AG04449 (cell line): ENCODE measurements at regions of chr17 and their contacts with region 1.

Region 1: GRCh38 chr17:39621523-39622379 is 5.0 kb upstream of the PPP1R1B start:
- DNase-seq: no peak
- H3K4me3 ChIP-seq: peak overlapping the region; percentile 8; the same call in 1 of the 2 replicates
- CTCF ChIP-seq: peak; percentile 100

Region 2: GRCh38 chr17:39527220-39527813 is 94.4 kb before region 1 on chr17:
- CTCF ChIA-PET with region 1: interaction called, 24 read pairs
- POLR2A ChIA-PET with region 1: no interaction called
- DNase-seq: no peak
- H3K4me3 ChIP-seq: no peak overlapping the region
- CTCF ChIP-seq: peak; percentile 39

Region 3: DNA sequence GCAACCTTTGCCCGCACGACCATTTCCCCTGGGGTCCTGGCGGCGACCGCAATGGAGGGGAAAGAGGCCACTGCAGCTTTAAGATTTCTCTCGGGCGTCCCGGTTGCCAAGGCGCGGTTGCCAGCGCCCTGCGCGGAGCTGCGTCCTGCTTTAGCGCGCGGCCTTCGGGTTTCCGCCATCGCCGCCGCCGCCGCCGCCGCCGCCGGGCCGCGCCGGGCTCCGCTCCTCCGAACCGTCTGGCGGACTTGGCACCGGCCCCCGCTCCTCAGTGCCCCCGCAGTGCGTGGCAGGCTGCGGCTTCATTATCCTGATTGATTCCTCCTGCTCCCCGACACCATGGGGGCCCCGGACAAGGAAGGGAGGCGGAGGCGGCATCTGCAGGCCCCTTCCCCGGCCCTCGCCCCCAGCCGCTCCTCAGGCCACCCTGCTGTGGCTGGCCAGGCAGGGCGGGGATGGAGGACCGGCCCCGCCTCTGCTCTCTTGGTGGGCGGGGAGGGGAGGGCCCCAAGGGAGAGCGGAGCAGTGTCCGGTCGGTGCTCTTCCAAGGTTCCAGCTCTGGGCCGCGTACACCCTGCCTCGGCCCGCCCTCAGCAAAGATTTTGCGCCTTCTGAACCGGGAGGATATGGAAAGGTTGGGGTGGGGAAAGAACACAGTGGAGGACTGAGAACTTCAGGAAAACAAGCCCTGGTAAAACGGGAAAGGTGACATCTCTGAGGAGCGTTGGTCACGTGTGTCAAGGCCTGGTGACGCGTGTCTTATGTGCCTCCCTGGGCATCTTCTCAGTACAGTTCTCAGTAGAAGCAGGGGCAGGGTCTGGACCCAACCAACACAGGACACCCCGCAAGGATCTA is 48.1 kb before region 1 on chr17:
- CTCF ChIA-PET with region 1: interaction called, 781 read pairs
- POLR2A ChIA-PET with region 1: no interaction called
- DNase-seq: no peak
- H3K4me3 ChIP-seq: peak overlapping the region; percentile 66
- CTCF ChIP-seq: no peak

Region 4: DNA sequence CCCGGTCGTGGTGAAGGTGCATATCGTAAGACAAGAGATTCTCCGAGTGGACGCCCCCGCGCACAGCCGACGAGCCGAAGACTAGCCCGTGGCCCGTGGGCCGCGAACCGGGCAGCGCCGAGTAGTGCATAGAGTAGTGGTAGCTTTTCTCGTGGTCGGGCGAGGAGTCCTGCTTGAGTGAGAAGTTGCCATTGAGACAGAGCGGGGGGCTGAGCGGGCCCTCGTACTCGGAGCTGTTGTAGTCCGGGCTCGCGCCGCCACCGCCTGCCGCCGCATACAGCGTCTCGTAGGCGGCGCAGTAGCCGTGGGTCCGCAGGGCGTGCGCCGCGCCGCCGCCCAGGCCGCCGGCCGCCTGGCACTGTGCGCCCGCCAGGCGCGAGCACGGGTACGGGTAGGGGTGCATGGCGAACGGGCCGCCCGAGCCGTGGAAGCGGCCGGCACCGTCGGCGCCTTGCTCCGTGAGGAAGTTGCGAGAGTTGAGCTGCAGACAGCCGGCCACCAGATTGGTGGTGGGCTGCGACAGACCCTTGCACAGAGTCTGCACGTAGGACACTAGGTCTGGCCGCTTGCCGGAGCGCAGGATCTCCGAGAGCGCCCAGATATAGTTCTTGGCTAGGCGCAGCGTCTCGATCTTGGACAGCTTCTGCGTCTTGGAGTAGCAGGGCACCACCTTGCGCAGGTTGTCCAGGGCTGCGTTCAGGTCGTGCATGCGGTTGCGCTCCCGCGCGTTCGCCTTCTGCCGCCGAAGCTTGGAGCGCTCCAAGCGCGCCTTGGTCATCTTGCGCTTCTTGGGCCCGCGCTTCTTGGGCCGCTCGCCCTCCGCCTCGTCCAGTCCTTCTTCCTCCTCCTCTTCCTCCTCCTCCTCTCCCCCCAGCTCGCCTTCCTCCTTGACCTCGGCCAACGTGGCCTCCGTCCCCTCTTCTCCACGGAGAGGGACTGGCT is 16.0 kb before region 1 on chr17:
- CTCF ChIA-PET with region 1: interaction called, 71 read pairs
- POLR2A ChIA-PET with region 1: no interaction called
- DNase-seq: no peak
- H3K4me3 ChIP-seq: no peak overlapping the region
- CTCF ChIP-seq: no peak

Region 5: DNA sequence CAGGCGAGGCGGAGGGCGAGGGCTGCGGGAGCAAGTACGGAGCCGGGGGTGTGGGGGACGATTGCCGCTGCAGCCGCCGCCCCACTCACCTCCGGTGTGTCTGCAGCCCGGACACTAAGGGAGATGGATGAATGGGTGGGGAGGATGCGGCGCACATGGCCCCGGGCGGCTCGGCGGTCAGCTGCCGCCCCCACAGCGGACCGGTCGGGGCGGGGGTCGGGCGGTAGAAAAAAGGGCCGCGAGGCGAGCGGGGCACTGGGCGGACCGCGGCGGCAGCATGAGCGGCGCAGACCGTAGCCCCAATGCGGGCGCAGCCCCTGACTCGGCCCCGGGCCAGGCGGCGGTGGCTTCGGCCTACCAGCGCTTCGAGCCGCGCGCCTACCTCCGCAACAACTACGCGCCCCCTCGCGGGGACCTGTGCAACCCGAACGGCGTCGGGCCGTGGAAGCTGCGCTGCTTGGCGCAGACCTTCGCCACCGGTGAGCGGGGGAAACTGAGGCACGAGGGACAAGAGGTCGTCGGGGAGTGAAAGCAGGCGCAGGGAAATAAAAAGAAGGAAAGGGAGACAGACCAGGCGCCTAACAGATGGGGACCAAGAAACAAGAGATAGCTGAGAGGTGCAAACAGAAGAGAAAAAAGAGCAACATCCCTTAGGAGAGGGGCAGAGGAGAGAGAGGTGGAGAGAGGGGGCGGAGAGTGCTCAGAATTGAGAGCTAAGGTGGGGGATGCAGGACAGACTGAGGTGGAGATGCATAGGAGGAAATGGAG is 46.6 kb after region 1 on chr17 and contains the start of gene PNMT:
- CTCF ChIA-PET with region 1: interaction called, 237 read pairs
- POLR2A ChIA-PET with region 1: no interaction called
- DNase-seq: no peak
- H3K4me3 ChIP-seq: peak within 1 kb of the TSS; percentile 29
- CTCF ChIP-seq: peak; percentile 87

Region 6: DNA sequence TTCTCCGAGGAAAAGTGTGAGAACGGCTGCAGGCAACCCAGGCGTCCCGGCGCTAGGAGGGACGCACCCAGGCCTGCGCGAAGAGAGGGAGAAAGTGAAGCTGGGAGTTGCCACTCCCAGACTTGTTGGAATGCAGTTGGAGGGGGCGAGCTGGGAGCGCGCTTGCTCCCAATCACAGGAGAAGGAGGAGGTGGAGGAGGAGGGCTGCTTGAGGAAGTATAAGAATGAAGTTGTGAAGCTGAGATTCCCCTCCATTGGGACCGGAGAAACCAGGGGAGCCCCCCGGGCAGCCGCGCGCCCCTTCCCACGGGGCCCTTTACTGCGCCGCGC is 78.0 kb after region 1 on chr17 and contains the start of gene ERBB2:
- CTCF ChIA-PET with region 1: interaction called, 19 read pairs
- POLR2A ChIA-PET with region 1: no interaction called
- DNase-seq: peak; percentile 31
- H3K4me3 ChIP-seq: peak within 1 kb of the TSS; percentile 78
- CTCF ChIP-seq: no peak

Region 7: GRCh38 chr17:39794249-39794970 is 172.7 kb after region 1 on chr17:
- CTCF ChIA-PET with region 1: no interaction called
- POLR2A ChIA-PET with region 1: no interaction called
- DNase-seq: no peak
- H3K4me3 ChIP-seq: no peak overlapping the region
- CTCF ChIP-seq: no peak

Region 8: GRCh38 chr17:39980351-39981206 is 358.8 kb after region 1 on chr17 and contains the start of gene PSMD3:
- CTCF ChIA-PET with region 1: interaction called, 14 read pairs
- POLR2A ChIA-PET with region 1: no interaction called
- DNase-seq: peak; percentile 97
- H3K4me3 ChIP-seq: peak within 1 kb of the TSS; percentile 96
- CTCF ChIP-seq: peak; percentile 64